ENCODE measurements at regions of chr2 and their contacts with region 1.

Region 1: GRCh38 chr2:173402405-173402974 is 47.8 kb downstream of the CDCA7 start:
- DNase-seq: peak; percentile 67 to 77
- H3K4me3 ChIP-seq: peak overlapping the region in 2 of 3 donors; percentile 27 to 59
- H3K27ac ChIP-seq: peak overlapping the region in 1 of 2 donors; percentile 69
- H3K4me1 ChIP-seq: no peaks in the 10 kb centered on the region
- H3K27me3 ChIP-seq: peaks cover 0 to 40% of the 10 kb centered on the region in 2 donors
- CTCF ChIP-seq: peak; percentile 64 to 93 (median 91)
- POLR2A ChIP-seq: no peak

Region 2: GRCh38 chr2:174286172-174286571 is 883.7 kb after region 1 on chr2:
- intact Hi-C with region 1: loop called (anchors 5 kb)
- DNase-seq: no peak
- H3K4me3 ChIP-seq: no peak overlapping the region
- H3K27ac ChIP-seq: no peak overlapping the region
- H3K4me1 ChIP-seq: no peaks in the 10 kb centered on the region
- H3K27me3 ChIP-seq: no peaks in the 10 kb centered on the region
- CTCF ChIP-seq: no peak
- POLR2A ChIP-seq: no peak

Region 3: GRCh38 chr2:174341286-174341994 is 939.0 kb after region 1 on chr2:
- intact Hi-C with region 1: loop called (anchors 10 kb)
- DNase-seq: peak; percentile 78 to 87
- H3K4me3 ChIP-seq: peak overlapping the region in 1 of 3 donors; percentile 48
- H3K27ac ChIP-seq: no peak overlapping the region
- H3K4me1 ChIP-seq: peaks cover 3 to 7% of the 10 kb centered on the region in 2 donors
- H3K27me3 ChIP-seq: peaks cover 19 to 81% of the 10 kb centered on the region in 2 donors
- CTCF ChIP-seq: peak; percentile 78 to 95 (median 92)
- POLR2A ChIP-seq: no peak